KBM-7 (cell line): ENCODE measurements at regions of chr14 and their contacts with region 1.

Region 1: GRCh38 chr14:91286530-91286937 is 42.0 kb upstream of the GPR68 start:
- DNase-seq: peak; percentile 84

Region 2: GRCh38 chr14:90383075-90383730 is 903.3 kb before region 1 on chr14:
- in situ Hi-C with region 1: no loop called
- DNase-seq: no peak

Region 3: GRCh38 chr14:90903101-90903500 is 383.4 kb before region 1 on chr14:
- in situ Hi-C with region 1: loop called (anchors 25 kb)
- DNase-seq: peak; percentile 67

Region 4: GRCh38 chr14:91185721-91186120 is 100.8 kb before region 1 on chr14:
- in situ Hi-C with region 1: loop called (anchors 10 kb)
- DNase-seq: no peak

Region 5: DNA sequence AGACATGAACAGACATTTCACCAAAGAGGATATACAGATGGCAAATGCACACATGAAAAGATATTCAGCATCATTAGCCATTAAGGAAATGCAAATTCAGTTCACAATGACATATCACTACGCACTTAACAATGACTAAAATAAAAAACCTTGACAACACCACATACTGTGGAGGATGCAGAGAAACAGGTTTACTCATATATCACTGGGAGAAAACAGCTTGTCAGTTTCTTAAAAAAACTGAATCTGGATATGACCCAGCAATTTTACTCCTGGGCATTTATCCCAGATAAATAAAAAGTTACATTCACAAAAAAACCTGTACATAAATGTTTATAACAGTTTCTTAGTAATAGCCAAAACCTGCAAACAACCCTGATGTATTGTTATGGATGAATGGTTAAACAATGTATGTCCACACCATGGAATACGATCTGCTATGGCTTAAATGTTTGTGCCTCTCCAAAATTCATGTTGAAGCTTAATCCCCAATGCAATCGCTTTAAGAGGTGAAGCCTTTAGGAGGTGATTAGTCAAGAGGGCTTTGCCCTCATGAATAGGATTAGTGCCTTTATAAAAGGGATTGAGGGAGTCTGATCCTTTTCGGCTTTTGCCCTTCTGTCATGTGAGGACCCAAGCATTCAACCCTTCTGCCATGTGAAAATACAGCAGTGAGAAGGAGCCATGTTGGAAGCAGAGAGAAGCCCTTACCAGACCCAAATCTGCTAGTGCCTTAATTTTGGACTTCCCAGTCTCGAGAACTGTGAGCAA is 259.6 kb after region 1 on chr14:
- in situ Hi-C with region 1: no loop called
- DNase-seq: no peak